GM13977 (cell line): ENCODE measurements at regions of chr4 and their contacts with region 1.

Region 1: DNA sequence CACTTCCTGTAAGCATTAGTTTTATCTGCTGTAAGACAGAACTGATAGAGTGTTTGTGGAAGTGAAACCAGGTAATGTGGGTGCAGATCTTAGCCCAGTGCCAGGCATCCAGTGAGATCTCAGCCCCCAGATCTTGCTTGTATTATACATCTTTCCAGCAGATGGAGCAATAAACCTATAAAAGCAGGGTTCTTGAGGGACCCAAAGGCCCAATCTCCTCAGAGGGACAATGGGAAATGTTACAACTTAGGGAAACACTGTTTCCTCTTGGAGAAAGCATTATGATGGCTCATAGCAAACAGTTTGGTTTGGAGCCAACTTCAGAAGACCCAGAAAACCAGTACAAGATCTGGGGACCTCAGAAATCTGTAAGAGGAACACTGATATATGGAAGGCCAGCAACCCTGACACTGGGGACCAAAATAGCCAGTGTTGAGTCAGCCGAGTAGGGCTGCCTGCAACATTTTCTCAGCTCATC is 206.3 kb downstream of the SLC7A11 start:
- DNase-seq: peak; percentile 59
- CTCF ChIP-seq: peak; percentile 48

Region 2: DNA sequence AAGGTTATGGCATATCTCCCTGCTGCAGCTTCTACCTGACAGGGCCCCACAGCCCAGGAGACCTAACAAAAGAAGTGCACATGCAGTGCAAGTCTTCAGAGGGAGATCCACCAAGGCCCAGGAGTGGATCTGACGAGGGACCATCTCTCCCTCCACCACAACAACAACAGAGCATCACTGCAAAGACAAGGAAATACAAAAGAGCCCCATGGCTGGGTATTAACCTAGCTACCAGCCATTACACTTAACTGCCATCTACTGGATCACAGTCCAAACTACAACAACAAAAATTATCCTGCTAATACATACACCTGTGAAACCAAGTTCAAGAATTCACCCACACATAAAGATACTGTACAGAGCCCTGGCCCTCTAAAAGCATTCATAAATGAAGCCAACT is 486.5 kb after region 1 on chr4:
- in situ Hi-C with region 1: loop called (anchors 25 kb)
- DNase-seq: peak; percentile 12
- CTCF ChIP-seq: peak; percentile 46

Region 3: GRCh38 chr4:138680989-138681604 is 645.3 kb after region 1 on chr4:
- in situ Hi-C with region 1: loop called (anchors 25 kb)
- DNase-seq: peak; percentile 48
- CTCF ChIP-seq: peak; percentile 84